ENCODE measurements at regions of chr1 and their contacts with region 1.

Region 1: GRCh38 chr1:87279966-87280535 is 48.6 kb upstream of the LMO4 start:
- DNase-seq: no peak

Region 2: GRCh38 chr1:87131809-87132283 is 148.2 kb before region 1 on chr1:
- intact Hi-C with region 1: loop called (anchors 2 kb)
- DNase-seq: peak; percentile 94

Region 3: DNA sequence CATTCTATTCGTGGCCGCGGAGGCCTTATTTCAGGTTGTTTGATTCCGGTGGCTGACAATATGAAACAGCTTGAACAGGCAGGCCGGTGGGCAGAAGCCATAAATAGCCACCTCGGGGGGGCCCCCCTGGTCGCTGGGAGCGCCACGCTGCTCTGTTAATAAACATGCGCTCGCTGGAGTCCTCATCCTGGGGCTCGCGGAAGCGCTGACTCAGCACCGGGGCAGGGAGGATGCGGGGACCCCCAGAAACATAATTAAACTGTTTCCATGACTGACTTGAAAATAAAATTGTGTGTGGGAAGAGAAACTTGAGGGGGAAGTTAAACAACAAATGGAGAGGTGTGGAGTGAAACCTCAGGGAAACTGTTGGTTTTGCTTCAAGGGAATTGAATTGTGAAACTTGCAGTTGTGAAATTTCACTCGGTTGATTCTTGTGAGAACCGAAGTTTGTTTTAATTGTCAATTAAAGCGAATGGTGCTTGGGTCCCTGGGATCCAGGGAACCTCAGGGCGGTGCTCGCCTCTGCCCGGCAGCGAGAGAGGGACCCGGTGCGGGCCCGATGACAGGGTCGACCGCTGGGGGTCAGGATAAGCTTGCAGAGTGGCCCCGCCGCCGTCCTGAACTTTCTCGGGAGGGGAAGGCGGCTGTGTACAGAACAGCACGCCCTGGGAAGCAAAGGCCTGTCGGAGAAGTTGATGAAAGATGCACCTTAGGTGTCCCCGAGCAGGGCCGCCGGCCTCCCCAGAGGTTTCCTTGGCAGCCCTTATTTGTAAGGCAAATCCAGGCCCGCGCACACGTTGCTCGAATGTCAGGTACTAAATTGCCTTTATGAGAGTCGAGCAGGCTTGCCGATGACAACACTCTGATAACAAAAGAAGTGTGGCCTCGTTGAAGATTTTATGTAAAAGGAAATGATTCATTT is 128.3 kb before region 1 on chr1:
- intact Hi-C with region 1: loop called (anchors 5 kb)
- DNase-seq: peak; percentile 84

Region 4: GRCh38 chr1:87226341-87226760 is 53.7 kb before region 1 on chr1:
- intact Hi-C with region 1: loop called (anchors 1 kb)
- DNase-seq: no peak